ENCODE measurements at regions of chr13 and their contacts with region 1.

Region 1: DNA sequence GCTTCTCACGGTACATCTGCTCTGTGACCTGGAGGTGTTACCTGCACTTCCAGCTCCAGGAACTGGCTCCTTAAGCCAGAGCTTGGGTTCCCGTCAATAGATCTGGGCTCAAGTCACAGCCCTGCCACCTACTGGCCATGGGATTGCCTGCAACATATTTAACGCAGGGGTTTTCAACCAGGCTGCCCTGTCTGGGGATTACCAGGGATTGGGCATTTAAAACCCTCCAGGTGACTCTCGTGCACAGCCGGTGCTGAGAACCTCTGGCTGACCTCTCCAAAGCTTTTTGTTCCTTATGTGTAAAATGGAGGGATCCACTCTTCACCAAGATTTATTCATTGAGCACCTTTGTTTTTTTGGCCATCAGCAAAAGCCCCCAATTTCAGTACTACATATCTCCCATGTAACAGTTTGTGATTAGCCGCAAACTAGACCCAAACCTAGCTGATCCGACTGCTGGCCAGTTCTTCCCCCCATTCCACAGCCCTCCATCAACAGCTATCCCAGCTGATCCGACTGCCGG is 76.6 kb upstream of the STK24 start:
- DNase-seq: peak; percentile 52 to 86 (median 67)
- ATAC-seq: peak; percentile 97
- H3K4me3 ChIP-seq: no peak overlapping the region
- H3K4me3 Mint-ChIP-seq: peak overlapping the region; percentile 9
- H3K27ac ChIP-seq: no peak overlapping the region
- H3K27ac Mint-ChIP-seq: no peak overlapping the region
- H3K4me1 ChIP-seq: peaks cover 6% of the 10 kb centered on the region
- H3K4me1 Mint-ChIP-seq: peaks cover 9% of the 10 kb centered on the region
- H3K27me3 ChIP-seq: peaks cover 0 to 2% of the 10 kb centered on the region in 2 experiments
- H3K27me3 Mint-ChIP-seq: no peaks in the 10 kb centered on the region
- CTCF ChIP-seq: peak; percentile 94

Region 2: GRCh38 chr13:97257800-97258799 is 1395.4 kb before region 1 on chr13:
- CTCF ChIA-PET with region 1: no interaction called
- POLR2A ChIA-PET with region 1: no interaction called
- intact Hi-C with region 1: no loop called
- DNase-seq: peak in 4 of 14 experiments; percentile 8 to 43 (median 20)
- ATAC-seq: peak; percentile 52
- H3K4me3 ChIP-seq: no peak overlapping the region
- H3K4me3 Mint-ChIP-seq: peak overlapping the region; percentile 15
- H3K27ac ChIP-seq: no peak overlapping the region
- H3K27ac Mint-ChIP-seq: peak overlapping the region; percentile 69
- H3K4me1 ChIP-seq: peaks cover 42% of the 10 kb centered on the region
- H3K4me1 Mint-ChIP-seq: peaks cover 79% of the 10 kb centered on the region
- H3K27me3 ChIP-seq: no peaks in the 10 kb centered on the region
- H3K27me3 Mint-ChIP-seq: no peaks in the 10 kb centered on the region
- CTCF ChIP-seq: no peak

Region 3: DNA sequence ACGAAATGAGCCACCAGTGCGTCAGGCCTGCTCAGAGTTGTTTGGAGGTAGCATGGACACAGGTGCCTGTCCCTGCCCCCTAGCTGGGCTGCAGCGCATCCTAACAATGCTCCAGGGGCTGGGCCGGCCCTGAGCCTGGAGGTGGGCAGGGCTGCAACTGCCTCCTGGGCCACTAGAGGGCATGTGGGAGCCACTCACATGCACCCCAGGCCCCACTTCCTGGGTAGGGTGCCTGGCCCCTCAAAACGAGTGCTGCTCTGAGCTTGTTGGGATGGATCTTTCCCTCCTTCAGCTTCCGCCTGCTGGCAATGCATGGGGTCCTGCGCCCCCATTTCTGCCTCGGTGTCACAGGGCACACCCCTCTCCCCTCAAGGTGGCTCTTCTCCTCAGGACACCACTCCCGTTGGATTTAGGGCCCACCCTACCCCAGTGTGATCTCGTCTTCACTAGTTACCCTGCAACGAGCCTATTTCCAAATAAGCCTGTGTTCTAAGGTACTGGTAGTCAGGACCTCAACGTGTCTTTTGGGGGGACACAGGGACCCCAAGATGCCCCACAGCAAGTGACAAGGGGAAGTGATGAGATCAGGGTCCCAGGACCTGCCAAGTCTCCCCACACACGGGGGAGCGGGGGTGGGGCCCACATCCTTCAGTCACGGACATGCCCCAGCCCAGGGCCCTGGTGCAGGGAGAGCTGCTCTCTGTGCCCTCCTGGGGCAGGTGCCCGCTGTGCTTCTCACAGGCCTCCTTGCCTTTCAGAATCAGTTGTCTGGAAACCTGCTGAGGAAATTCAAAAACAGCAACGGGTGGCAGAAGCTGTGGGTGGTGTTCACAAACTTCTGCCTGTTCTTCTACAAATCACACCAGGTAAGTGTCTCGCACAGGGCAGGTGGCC is 207.9 kb before region 1 on chr13:
- CTCF ChIA-PET with region 1: interaction called, 49 read pairs
- POLR2A ChIA-PET with region 1: interaction called, 11 read pairs
- intact Hi-C with region 1: loop called (anchors 1 kb)
- DNase-seq: peak; percentile 62 to 88 (median 74)
- ATAC-seq: peak; percentile 99
- H3K4me3 ChIP-seq: no peak overlapping the region
- H3K4me3 Mint-ChIP-seq: peak overlapping the region; percentile 63
- H3K27ac ChIP-seq: peak overlapping the region; percentile 52 to 55
- H3K27ac Mint-ChIP-seq: peak overlapping the region; percentile 90
- H3K4me1 ChIP-seq: peaks cover 16% of the 10 kb centered on the region
- H3K4me1 Mint-ChIP-seq: peaks cover 22% of the 10 kb centered on the region
- H3K27me3 ChIP-seq: no peaks in the 10 kb centered on the region
- H3K27me3 Mint-ChIP-seq: no peaks in the 10 kb centered on the region
- CTCF ChIP-seq: peak; percentile 97

Region 4: DNA sequence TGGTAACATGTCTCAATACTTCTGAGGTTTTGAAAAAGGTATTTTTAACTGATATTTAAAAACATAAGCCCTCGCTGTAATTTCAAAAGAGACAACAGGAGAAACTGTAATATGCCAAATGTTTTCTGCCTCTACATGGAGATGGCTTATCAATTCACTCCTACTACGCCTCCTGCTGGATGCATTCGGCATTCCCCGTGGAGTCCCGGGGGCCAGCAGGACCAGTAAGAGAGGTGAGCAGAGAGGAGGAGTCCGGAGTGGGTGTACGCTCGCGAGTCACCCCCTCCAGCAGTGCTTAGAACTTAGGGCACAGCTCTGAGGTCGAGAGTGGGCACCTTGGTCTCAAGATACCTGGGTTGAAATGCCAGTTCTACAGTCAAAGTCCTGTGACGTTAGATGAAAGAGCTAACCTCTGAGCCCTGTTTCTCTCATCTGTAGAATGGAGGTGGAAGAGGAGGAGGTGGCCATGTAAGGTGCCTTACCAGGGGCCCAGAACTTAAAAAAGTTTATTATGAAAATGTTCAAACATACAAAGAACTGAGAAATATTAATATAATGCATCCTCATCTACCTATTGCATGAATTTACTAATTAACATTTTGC is 186.8 kb before region 1 on chr13:
- CTCF ChIA-PET with region 1: interaction called, 15 read pairs
- POLR2A ChIA-PET with region 1: no interaction called
- intact Hi-C with region 1: no loop called
- DNase-seq: peak in 9 of 14 experiments; percentile 20 to 66 (median 32)
- ATAC-seq: peak; percentile 54
- H3K4me3 ChIP-seq: no peak overlapping the region
- H3K4me3 Mint-ChIP-seq: no peak overlapping the region
- H3K27ac ChIP-seq: no peak overlapping the region
- H3K27ac Mint-ChIP-seq: peak overlapping the region; percentile 3
- H3K4me1 ChIP-seq: peaks cover 3% of the 10 kb centered on the region
- H3K4me1 Mint-ChIP-seq: peaks cover 34% of the 10 kb centered on the region
- H3K27me3 ChIP-seq: no peaks in the 10 kb centered on the region
- H3K27me3 Mint-ChIP-seq: no peaks in the 10 kb centered on the region
- CTCF ChIP-seq: peak; percentile 52

Region 5: DNA sequence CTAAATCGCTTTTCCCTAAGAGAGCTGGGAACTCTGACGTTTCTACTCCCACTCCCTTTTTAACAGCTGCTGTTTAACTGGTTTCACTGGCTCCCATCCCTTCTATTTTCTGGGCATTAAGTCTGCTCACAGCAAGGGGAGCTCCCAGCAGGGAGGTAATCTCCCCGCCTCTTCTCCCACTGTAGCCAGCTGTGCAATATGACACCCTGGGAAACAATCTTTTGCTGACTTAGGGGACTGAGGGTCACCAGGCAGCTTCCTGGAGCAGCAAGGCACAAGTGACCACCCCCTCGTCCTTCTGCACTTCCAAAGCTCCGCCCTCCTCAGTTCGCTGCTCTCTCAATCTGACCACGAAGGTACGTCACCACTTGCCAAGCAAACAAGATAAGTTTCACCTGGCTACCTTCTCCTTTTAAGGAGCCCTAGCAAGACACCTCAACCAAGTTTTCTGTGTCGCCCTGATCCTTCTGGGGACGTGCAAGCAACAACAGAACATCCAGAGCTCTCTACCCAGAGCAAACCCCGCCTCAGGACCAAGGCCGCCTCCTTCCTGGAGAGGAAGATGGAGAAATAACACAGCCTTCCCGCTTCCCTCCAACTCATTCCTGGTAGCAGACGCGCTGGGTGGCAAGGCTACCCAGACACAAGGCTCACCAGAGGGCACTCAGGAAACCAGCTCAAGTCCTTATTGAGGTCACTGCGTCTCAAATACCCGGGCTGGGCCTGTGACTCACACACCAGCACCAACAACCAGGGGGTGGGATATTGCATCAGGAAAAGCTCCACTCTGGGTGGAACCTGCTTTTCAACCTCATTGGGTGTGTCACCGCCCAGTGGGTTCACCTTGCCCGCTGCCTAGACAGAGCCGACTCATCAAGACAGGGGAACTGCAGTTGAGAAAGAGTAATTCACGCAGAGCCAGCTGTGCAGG is 169.0 kb before region 1 on chr13:
- CTCF ChIA-PET with region 1: interaction called, 15 read pairs
- POLR2A ChIA-PET with region 1: interaction called, 3 read pairs
- intact Hi-C with region 1: no loop called
- DNase-seq: peak; percentile 33 to 93 (median 61)
- ATAC-seq: peak; percentile 80
- H3K4me3 ChIP-seq: no peak overlapping the region
- H3K4me3 Mint-ChIP-seq: peak overlapping the region; percentile 69
- H3K27ac ChIP-seq: peak overlapping the region; percentile 29 to 50
- H3K27ac Mint-ChIP-seq: peak overlapping the region; percentile 89
- H3K4me1 ChIP-seq: peaks cover 88% of the 10 kb centered on the region
- H3K4me1 Mint-ChIP-seq: peaks cover 81% of the 10 kb centered on the region
- H3K27me3 ChIP-seq: no peaks in the 10 kb centered on the region
- H3K27me3 Mint-ChIP-seq: no peaks in the 10 kb centered on the region
- CTCF ChIP-seq: no peak

Region 6: GRCh38 chr13:98977568-98978265 is 324.2 kb after region 1 on chr13 and contains the start of gene DOCK9:
- CTCF ChIA-PET with region 1: no interaction called
- POLR2A ChIA-PET with region 1: no interaction called
- intact Hi-C with region 1: no loop called
- DNase-seq: no peak
- ATAC-seq: no peak
- H3K4me3 ChIP-seq: no peak within 1 kb of the TSS
- H3K4me3 Mint-ChIP-seq: no peak within 1 kb of the TSS
- H3K27ac ChIP-seq: no peak within 1 kb of the TSS
- H3K27ac Mint-ChIP-seq: peak within 1 kb of the TSS; percentile 70
- H3K4me1 ChIP-seq: peaks cover 28% of the 10 kb centered on the region
- H3K4me1 Mint-ChIP-seq: peaks cover 83% of the 10 kb centered on the region
- H3K27me3 ChIP-seq: no peaks in the 10 kb centered on the region
- H3K27me3 Mint-ChIP-seq: no peaks in the 10 kb centered on the region
- CTCF ChIP-seq: no peak
- total RNA-seq, gene DOCK9: 76.3 to 79.3 TPM

Region 7: GRCh38 chr13:99151516-99151915 is 498.0 kb after region 1 on chr13:
- CTCF ChIA-PET with region 1: no interaction called
- POLR2A ChIA-PET with region 1: no interaction called
- intact Hi-C with region 1: no loop called
- DNase-seq: no peak
- ATAC-seq: no peak
- H3K4me3 ChIP-seq: no peak overlapping the region
- H3K4me3 Mint-ChIP-seq: no peak overlapping the region
- H3K27ac ChIP-seq: no peak overlapping the region
- H3K27ac Mint-ChIP-seq: no peak overlapping the region
- H3K4me1 ChIP-seq: no peaks in the 10 kb centered on the region
- H3K4me1 Mint-ChIP-seq: no peaks in the 10 kb centered on the region
- H3K27me3 ChIP-seq: no peaks in the 10 kb centered on the region
- H3K27me3 Mint-ChIP-seq: no peaks in the 10 kb centered on the region
- CTCF ChIP-seq: no peak

Region 8: DNA sequence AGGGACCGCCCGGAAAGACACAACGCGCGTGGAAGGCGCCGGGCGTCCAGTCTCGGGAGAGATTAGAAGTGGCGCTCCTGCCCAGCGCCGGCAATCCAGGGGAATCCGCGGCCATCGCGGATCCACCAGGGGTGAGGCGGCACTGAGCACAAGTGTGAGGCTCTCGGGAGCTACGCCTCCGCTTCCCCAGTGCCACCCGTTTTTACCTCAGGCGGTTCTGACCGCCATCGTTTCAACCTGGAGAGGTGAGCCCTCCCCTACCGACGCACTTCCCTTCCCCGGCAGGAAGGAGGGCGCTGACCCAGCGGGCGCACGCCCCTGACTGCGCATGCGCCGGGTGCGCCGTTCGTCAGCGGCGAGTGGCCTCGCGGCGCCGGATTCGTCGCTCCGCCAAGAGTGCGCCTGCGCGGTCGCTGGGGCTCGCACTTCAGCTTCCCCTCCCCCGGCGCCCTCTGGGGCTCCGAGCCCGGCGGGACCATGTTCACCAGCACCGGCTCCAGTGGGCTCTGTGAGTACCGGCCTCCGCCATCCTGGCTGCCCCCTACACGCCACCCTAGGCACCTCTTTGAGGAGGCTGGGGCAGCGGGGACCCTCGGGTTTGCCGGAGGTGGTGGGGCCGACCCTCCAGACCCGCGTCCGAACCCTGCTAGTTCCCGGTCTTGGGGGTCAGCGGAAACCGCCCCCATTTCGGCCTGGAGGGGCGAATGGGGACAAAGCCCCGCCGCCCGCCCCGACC is 547.1 kb after region 1 on chr13 and contains the start of gene UBAC2:
- CTCF ChIA-PET with region 1: no interaction called
- POLR2A ChIA-PET with region 1: no interaction called
- intact Hi-C with region 1: no loop called
- DNase-seq: peak; percentile 90 to 100 (median 97)
- ATAC-seq: peak; percentile 79
- H3K4me3 ChIP-seq: peak within 1 kb of the TSS; percentile 99
- H3K4me3 Mint-ChIP-seq: peak within 1 kb of the TSS; percentile 95
- H3K27ac ChIP-seq: peak within 1 kb of the TSS; percentile 97 to 99
- H3K27ac Mint-ChIP-seq: peak within 1 kb of the TSS; percentile 93
- H3K4me1 ChIP-seq: peaks cover 36% of the 10 kb centered on the region
- H3K4me1 Mint-ChIP-seq: peaks cover 67% of the 10 kb centered on the region
- H3K27me3 ChIP-seq: no peaks in the 10 kb centered on the region
- H3K27me3 Mint-ChIP-seq: no peaks in the 10 kb centered on the region
- CTCF ChIP-seq: no peak
- total RNA-seq, gene UBAC2: 59.8 to 67.4 TPM

Measured in CD4-positive, alpha-beta T cell (primary cell).